HepG2 (cell line): ENCODE measurements at regions of chr12 and their contacts with region 1.

Region 1: DNA sequence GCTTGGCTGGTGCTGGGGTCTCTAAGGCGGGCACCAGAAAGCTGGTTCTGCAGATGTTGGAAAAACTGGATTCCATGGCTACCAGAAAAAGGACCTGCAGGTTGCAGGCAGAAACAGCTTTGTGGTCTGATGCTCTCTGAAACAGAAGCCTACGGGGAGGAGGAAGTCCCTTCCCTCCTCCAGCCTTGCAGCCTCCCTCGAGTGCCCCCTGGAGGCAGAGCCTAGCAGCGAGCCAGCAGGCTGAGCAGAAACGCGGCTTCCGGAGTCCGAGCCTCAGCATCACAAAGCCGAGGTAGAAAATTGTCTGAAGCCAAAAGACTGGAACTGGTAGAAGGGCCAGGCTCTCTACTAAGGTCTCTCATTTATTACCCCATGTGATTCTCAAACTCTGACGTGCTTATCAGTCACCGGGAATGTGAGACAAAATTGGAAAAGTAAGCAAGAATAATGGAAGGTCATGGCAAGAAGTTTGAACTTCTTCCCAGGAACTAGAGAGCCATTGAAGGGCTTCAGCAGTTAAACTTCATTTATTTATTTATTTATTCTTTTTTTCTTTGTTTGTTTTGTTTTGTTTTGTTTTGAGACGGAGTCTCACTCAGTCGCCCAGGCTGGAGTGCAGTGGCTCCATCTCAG is 82.2 kb upstream of the CPSF6 start:
- DNase-seq: peak; percentile 63
- ATAC-seq: peak; percentile 93
- H3K4me3 ChIP-seq: peak overlapping the region in 1 of 3 experiments; percentile 40; a peak in 1 of 6 replicates
- H3K27ac ChIP-seq: no peak overlapping the region
- H3K4me1 ChIP-seq: peaks cover 19% of the 10 kb centered on the region
- H3K27me3 ChIP-seq: peaks cover 0 to 4% of the 10 kb centered on the region in 2 experiments; a peak in 1 of 5 replicates
- CTCF ChIP-seq: peak; percentile 93
- EP300 ChIP-seq: no peak
- POLR2A ChIP-seq: no peak
- RAD21 ChIP-seq: peak; percentile 53; the same call in 1 of the 2 replicates

Region 2: DNA sequence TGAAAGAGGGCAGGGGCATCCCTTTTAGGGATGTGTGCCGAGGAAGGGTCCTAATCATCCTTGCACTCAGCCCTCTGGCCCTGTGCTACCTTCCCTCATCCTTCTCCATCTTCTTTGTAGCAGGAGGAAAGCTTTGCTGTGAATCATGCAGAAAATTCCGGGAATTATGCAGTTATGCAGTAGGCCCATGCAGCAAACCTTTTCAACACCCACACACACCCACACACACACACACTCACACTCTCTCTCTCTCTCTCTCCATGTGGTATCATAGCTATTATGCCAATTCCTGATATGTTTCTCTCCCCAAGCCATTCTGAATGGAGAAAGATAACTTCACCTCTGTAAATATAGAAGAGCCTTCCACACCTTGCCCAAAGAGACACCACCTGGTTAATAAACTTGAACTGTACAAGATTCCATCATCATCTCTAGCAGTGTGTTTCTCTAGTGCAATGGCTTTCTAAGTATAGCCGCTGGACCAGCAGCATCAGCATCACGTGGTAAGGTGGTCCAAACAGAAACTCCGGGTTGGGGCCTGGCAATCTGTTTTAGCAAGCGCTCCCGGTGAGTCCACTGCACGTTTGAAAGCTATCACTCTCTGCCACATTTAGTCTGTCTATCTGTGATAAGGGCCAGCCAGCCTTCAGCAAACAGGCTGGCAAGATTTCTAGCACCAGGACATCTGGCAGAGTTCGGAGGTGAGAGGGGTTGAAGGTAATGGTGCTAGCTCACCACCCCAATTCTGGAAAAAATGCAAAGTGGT is 291.6 kb before region 1 on chr12:
- CTCF ChIA-PET with region 1: no interaction called
- POLR2A ChIA-PET with region 1: no interaction called
- in situ Hi-C with region 1: no loop called
- intact Hi-C with region 1: loop called (anchors 5 kb)
- DNase-seq: no peak
- ATAC-seq: no peak
- H3K4me3 ChIP-seq: no peak overlapping the region
- H3K27ac ChIP-seq: no peak overlapping the region
- H3K4me1 ChIP-seq: no peaks in the 10 kb centered on the region
- H3K27me3 ChIP-seq: peaks cover 0 to 2% of the 10 kb centered on the region in 2 experiments; a peak in 1 of 5 replicates
- CTCF ChIP-seq: no peak
- EP300 ChIP-seq: no peak
- POLR2A ChIP-seq: no peak
- RAD21 ChIP-seq: no peak

Region 3: GRCh38 chr12:69254046-69254445 is 96.9 kb after region 1 on chr12:
- CTCF ChIA-PET with region 1: interaction called, 17 read pairs
- POLR2A ChIA-PET with region 1: no interaction called
- in situ Hi-C with region 1: loop called (anchors 10 kb)
- intact Hi-C with region 1: loop called (anchors 1 kb)
- DNase-seq: peak; percentile 55
- ATAC-seq: peak; percentile 57
- H3K4me3 ChIP-seq: no peak overlapping the region
- H3K27ac ChIP-seq: no peak overlapping the region
- H3K4me1 ChIP-seq: no peaks in the 10 kb centered on the region
- H3K27me3 ChIP-seq: no peaks in the 10 kb centered on the region
- CTCF ChIP-seq: peak; percentile 53
- EP300 ChIP-seq: no peak
- POLR2A ChIP-seq: no peak
- RAD21 ChIP-seq: no peak; the same call in 1 of the 2 replicates